Left ventricle myocardium superior (tissue), 1 donor: ENCODE measurements at regions of chr6 and their contacts with region 1.

Region 1: DNA sequence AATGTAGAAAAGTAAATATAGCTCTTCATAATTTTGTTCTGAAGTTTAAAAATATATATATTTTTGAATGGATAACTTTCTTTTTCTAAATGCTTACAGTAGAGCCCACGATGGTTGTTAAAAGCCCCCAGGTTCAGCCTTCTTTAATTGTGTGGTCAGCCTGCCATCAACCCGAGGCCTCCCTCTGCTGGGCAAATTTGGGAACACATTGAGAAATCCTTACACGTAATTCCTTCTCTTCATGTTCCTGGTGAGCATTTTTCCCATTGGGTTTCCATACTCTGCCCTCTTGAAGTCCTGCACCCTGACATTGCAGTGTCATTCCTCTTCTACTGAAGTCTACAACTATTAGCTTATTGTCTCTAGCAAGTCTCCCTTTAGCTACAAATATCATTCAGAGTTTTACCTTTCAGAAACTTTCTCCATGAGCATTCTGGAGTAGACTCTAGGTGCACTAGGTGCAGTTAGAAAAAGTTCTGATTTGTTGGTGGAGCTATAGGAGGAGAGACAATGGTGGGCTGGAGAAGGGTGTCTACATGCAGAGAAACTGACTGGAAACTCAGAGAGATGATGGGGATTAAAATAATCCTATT is 40.6 kb downstream of the TRIM38 start:
- DNase-seq: no peak
- ATAC-seq: peak; percentile 71

Region 2: GRCh38 chr6:25726122-25726911 is 276.9 kb before region 1 on chr6:
- intact Hi-C with region 1: loop called (anchors 10 kb)
- DNase-seq: no peak
- ATAC-seq: no peak

Region 3: DNA sequence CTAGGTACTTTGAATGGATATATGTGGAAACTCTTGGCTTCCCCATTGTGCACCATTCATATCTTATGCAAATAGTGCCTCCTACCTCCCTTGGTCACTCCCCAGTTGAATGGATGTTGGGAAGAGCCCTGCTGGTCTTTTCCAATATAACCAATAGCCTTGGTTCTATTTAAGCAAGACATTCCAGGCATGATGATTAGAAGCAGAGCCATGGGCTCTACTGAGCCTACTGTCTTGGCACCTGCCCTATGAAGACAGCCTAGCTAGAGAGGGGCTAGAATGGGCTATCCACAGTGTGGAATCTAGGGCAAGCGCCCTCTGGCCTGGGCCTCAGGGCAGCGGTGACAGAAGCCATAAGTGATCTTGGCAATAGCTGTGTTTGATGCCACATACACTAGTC is 186.9 kb before region 1 on chr6:
- intact Hi-C with region 1: no loop called
- DNase-seq: no peak
- ATAC-seq: no peak